ENCODE measurements at regions of chr11 and their contacts with region 1.

Region 1: DNA sequence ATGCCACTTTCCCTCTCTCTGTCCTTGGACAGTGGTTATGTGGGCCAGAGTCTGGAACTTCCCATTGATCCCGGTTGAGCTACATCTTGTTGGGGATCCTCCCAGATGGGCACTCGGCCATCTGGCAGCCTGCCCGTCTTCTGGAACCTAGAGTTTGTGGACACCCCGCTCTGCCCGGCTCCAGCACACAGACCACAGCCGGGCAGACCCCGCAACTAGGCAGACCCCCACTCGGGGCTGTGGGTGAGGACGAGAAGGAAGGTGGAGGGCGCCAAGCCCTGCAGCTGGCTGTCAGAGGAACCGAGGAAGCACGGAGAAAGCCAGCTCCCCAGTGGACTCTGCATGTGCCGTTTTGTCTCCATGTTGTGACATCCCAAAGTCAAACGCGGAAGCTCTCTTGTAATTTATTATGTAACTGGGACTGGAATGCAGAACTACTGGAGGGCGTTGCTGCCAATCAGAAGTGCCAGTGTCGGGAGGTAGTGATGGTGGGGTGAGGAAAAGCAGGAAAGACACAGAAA is 207.7 kb downstream of the CEP164 start:
- DNase-seq: peak; percentile 54 to 92 (median 80)

Region 2: DNA sequence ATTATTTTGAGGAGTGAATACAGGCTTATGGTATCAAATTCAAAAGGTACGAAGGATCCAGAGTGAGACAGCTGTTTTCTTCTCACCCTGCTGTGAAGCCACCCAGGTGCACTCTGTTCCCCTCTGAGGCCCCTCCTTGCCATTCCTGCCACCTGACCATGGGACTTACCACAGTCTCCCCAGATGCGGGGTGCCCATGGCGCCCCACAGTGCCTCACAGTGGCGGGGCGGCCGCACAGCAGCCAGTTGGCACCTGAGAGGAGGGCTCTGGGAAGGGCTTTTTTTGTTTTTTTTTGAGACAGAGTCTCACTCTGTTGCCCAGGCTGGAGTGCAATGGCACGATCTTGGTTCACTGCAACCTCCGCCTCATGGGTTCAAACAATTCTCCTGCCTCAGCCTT is 55.9 kb before region 1 on chr11:
- intact Hi-C with region 1: no loop called
- DNase-seq: peak in 1 of 42 donors; percentile 45

Region 3: DNA sequence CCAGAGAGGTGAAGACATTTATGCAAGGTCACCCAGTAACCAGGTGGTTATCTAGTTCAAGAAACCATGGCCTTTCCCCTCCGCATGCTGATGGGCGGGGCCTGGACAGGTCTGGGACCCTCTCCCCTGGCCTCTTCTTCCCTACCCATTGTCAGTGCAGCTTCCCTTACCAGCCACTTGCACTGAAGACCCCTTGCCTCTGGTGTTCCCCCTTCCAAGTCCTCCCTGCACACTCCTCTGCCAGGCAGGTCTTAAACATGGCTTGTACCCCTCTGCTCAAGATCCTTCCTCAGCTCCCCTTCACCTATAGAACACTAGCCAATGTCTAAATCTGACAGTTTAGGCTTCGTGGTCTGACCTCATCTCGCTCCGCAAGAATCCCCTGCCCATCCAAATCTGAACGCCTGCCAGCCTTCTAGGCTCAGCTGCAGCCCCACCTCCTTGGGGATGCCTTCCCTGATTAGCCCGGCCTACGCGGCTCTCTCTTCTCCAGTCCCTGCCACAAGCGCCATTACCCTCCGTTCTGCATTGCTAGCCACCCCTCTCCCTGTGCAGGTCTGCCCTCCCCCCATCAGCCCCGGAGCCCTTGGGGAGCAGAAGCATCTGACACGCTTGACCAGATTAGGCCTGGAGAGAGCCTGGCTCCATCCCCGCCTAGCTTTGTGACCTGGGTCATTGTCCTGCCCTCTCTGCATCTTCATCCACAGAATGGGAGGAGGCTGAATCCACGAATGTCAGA is 47.9 kb after region 1 on chr11:
- intact Hi-C with region 1: loop called (anchors 5 kb)
- DNase-seq: peak in 32 of 42 donors; percentile 18 to 84 (median 60)

Measured in head of caudate nucleus (tissue), 42 donors.